ENCODE measurements at regions of chr1 and their contacts with region 1.

Region 1: DNA sequence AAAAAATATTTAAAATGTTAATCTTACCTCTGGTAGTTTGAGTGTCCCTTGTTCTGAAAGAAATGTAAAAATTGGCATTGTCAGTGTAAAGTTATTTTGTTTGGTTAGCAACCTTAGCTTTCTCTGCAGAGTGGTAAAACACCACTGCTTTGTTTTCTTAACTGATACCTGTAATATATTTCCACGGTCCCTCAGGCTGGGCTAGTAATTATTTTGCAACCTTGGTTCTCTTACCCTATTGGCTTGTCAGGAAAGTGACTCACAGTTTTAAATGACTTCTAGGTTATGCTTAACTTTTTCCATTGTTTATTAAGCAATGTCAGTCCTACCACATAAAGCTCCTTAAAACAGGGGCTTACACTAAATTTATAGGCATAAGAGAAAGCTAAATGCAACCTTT is 276.6 kb downstream of the VAV3 start:
- DNase-seq: no peak
- H3K4me3 ChIP-seq: peak overlapping the region in 2 of 3 donors; percentile 45 to 62
- H3K27ac ChIP-seq: peak overlapping the region; percentile 71 to 85
- H3K4me1 ChIP-seq: peaks cover 0 to 4% of the 10 kb centered on the region in 2 donors
- H3K27me3 ChIP-seq: no peaks in the 10 kb centered on the region
- CTCF ChIP-seq: no peak
- POLR2A ChIP-seq: peak; percentile 42

Region 2: DNA sequence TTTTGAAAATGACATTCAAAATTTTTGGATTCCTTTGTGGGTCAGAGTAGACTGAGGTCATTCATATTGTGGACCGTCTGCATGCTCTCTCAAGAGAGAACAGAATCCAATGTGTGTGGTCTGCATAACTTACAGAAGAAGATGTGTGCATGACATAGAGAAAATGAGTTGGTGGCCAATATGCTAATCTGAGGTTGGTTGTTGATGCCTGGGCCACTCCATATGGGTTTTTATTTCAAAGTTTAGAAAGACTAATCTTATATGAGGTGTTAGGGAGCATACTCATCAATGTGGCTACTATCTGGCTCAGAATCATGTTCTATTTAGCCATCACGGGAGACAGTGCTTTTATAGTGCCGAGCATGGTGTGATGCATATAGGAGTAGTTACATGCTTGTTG is 529.4 kb before region 1 on chr1:
- intact Hi-C with region 1: loop called (anchors 5 kb)
- DNase-seq: no peak
- H3K4me3 ChIP-seq: no peak overlapping the region
- H3K27ac ChIP-seq: no peak overlapping the region
- H3K4me1 ChIP-seq: no peaks in the 10 kb centered on the region
- H3K27me3 ChIP-seq: no peaks in the 10 kb centered on the region
- CTCF ChIP-seq: no peak
- POLR2A ChIP-seq: no peak

Region 3: GRCh38 chr1:107499139-107499744 is 189.1 kb before region 1 on chr1:
- intact Hi-C with region 1: no loop called
- DNase-seq: no peak
- H3K4me3 ChIP-seq: no peak overlapping the region
- H3K27ac ChIP-seq: no peak overlapping the region
- H3K4me1 ChIP-seq: no peaks in the 10 kb centered on the region
- H3K27me3 ChIP-seq: no peaks in the 10 kb centered on the region
- CTCF ChIP-seq: no peak
- POLR2A ChIP-seq: no peak

Region 4: GRCh38 chr1:107620753-107621152 is 67.6 kb before region 1 on chr1:
- intact Hi-C with region 1: no loop called
- DNase-seq: no peak
- H3K4me3 ChIP-seq: no peak overlapping the region
- H3K27ac ChIP-seq: no peak overlapping the region
- H3K4me1 ChIP-seq: no peaks in the 10 kb centered on the region
- H3K27me3 ChIP-seq: no peaks in the 10 kb centered on the region
- CTCF ChIP-seq: no peak
- POLR2A ChIP-seq: no peak

Region 5: GRCh38 chr1:107724648-107725047 is 36.3 kb after region 1 on chr1:
- intact Hi-C with region 1: no loop called
- DNase-seq: no peak
- H3K4me3 ChIP-seq: no peak overlapping the region
- H3K27ac ChIP-seq: no peak overlapping the region
- H3K4me1 ChIP-seq: no peaks in the 10 kb centered on the region
- H3K27me3 ChIP-seq: no peaks in the 10 kb centered on the region
- CTCF ChIP-seq: no peak
- POLR2A ChIP-seq: no peak

Measured in breast epithelium (tissue), 4 donors.